ENCODE measurements at regions of chr13 and their contacts with region 1.

Region 1: DNA sequence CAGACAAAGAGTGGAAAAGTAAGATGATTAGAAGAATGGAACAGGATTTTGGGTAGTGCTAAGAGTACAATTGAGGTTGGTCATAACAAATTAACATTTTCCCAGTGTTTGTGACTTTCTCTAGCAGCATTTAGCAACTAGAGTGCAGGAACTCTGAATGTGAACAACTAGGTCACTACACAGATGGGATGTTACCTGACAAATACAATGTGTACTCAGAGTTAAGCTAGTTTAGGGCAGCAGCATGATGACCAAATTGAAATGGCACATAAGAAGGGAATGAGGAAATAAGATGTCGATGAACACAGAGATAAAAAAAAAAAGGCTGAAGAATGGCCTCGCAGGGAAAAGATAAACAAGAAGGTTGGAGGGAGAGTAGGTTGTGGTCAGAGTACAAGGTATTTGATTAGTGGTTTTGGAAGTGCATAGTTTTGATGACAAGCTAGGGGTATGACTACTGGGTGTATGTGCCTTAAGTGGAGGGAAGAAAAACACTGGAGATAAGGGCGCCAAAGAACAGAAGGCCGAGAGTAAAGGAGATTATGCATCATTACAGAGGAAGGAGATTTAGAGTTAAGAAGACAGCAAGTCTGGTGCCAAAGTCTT is 381.1 kb downstream of the FGF14 start:
- DNase-seq: no peak
- ATAC-seq: no peak
- H3K4me3 ChIP-seq: no peak overlapping the region
- H3K27ac ChIP-seq: no peak overlapping the region
- H3K4me1 ChIP-seq: no peaks in the 10 kb centered on the region
- H3K27me3 ChIP-seq: no peaks in the 10 kb centered on the region
- CTCF ChIP-seq: no peak
- EP300 ChIP-seq: no peak
- POLR2A ChIP-seq: no peak
- RAD21 ChIP-seq: no peak

Region 2: DNA sequence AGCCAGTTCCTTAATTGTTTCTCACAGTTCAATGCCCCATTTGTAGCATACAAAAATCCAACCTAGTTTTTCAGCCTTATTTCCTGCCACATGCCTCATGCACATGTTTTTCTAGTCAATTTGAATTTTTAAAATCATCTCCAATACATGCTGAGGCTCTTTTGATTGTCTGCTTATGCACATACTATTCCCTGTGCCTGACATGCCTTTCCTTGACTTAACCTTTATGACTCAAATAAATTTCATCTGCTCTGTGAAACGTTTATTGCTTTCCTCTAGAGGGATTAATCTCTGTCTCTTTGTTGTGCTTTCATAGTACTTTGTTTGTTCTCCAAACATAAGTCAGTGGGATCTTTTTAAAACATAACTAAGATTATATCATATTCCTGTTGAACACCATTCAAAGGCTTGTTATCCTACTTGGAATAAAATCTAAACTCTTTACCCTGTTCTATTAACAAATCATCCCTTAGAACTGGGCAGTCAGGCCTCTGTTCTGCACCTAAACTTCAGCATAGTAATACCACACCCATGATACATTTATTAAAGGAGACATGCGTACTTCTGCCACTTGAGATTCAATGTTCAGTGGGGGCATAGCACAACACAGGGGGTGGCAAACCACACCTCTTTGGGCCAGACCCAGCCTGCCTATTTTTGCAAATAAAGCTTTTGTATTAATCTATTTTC is 34.5 kb after region 1 on chr13:
- CTCF ChIA-PET with region 1: no interaction called
- POLR2A ChIA-PET with region 1: no interaction called
- in situ Hi-C with region 1: no loop called
- intact Hi-C with region 1: loop called (anchors 1 kb)
- DNase-seq: no peak
- ATAC-seq: no peak
- H3K4me3 ChIP-seq: no peak overlapping the region
- H3K27ac ChIP-seq: no peak overlapping the region
- H3K4me1 ChIP-seq: no peaks in the 10 kb centered on the region
- H3K27me3 ChIP-seq: no peaks in the 10 kb centered on the region
- CTCF ChIP-seq: no peak
- EP300 ChIP-seq: no peak
- POLR2A ChIP-seq: no peak
- RAD21 ChIP-seq: no peak